ENCODE measurements at regions of chr17 and their contacts with region 1.

Region 1: DNA sequence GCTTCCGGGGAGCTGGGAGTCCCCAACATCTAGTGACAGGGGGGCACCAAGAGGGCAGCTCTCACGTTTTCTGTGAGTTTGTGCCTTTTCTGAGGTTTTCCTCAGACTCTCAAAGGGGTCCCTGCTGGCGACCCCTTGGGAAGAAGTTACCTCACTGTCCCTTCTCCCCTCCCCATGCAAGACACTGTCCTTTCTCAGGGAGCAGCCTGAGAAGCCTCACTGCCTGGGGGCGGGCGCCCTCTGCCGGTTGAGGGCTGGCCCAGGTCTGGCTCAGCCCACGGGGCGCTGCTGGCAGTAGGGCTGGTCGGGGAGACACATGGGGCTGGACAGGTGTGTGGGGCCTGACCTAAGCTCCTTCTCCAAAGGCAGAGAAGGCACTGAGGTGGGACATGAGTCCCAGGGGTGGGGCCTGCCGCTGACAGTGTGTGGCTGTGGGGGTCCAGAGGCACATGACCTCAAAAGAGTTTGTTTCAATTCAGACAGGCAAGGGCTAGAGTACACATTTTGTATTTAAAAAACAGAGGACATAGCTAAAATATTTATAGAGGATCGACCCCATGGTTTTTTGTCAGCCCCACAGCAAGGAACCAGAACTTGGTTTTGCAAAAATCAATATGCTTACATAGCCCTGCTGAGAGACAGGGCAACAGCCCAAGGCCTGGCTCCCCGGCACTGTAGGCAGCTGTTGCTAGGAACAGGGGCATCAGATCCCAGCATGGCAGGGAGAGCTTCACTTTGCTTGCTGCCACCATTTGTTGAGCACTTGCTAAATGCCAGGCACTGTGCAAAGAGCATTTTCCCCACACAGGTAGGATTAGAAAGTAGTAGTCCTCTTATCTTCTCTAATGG is 18.5 kb upstream of the ALDH3A1 start:
- DNase-seq: peak; percentile 61
- H3K4me3 ChIP-seq: no peak overlapping the region
- H3K27ac ChIP-seq: no peak overlapping the region
- H3K4me1 ChIP-seq: no peaks in the 10 kb centered on the region
- H3K27me3 ChIP-seq: no peaks in the 10 kb centered on the region
- CTCF ChIP-seq: peak; percentile 73 to 95 (median 91)
- POLR2A ChIP-seq: no peak

Region 2: DNA sequence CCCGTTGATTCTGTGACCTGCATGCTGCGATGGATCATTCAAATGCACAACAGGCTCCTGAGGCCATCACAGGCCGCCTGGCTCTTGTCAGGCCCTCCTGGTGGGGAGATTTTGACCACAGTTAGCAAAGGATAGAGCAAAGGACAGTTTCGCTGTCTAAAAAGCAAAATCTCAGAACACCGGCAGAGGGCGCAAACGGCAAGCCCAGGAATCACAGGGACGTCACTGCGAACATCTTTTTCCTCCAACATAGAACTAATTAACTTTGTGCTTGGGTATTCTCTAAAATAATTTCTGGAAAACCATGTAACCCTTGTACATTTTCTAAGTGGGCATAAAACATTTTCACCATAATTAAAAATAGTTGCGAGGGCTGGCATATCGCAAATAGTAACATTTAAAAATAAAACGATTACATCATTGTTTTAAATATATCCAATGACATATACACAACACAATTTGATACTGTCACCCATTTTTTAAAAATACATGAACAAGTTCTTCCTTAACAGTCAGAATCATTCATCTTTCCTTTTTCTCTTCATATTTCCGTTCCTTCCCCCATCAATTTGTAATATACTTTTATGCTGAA is 252.7 kb before region 1 on chr17:
- intact Hi-C with region 1: loop called (anchors 1 kb)
- DNase-seq: peak; percentile 49
- H3K4me3 ChIP-seq: no peak overlapping the region
- H3K27ac ChIP-seq: no peak overlapping the region
- H3K4me1 ChIP-seq: no peaks in the 10 kb centered on the region
- H3K27me3 ChIP-seq: no peaks in the 10 kb centered on the region
- CTCF ChIP-seq: peak; percentile 84 to 90 (median 89)
- POLR2A ChIP-seq: no peak

Measured in prostate gland (tissue), 2 donors.